ENCODE measurements at regions of chr1 and their contacts with region 1.

Region 1: DNA sequence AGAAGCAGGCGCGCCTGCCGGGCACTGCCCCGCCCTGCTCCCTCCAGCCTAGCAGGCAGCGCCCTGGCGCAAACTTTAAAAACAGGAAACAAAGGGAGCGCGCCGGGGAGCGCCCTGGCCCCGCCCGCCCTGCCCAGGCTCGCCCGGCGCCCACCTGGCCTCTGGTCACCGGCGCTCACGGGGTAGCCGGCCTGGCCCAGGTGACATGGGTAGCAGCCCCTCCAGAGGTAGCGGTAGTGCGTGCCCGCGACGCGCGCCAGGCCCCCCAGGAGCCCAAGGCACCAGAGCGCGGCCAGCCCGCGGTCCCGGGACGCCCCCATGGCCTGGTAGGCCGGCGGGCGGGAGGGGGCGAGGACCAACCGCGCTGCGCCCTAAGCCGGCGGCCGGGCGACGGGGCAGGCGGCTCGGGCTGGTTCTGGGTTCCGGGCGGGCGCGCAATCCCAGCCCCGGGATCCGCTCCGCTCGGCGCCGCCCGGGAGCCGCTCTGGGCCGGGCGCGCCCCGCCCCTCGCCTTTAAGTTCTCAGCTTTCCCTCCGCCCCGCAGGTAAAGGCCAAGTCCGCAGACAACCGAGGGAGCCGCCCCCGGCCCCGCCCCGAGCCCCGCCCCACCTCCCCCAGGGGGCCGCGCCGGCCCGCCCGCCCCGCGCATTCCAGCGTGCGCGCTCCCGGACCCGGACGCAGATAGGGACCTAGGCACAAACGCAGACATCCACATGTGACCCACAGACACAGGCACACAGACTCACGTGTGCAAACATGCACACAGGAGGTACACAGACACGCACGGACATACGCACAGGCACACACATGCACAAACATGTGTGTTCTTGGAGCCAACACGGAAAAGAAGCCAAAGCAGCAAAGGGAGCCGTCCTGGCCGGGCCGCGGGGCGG is 76.7 kb downstream of the ARHGEF16 start:
- DNase-seq: peak; percentile 90
- H3K4me3 Mint-ChIP-seq: peak overlapping the region; percentile 78
- H3K27ac Mint-ChIP-seq: peak overlapping the region; percentile 38
- H3K4me1 Mint-ChIP-seq: peaks cover 10% of the 10 kb centered on the region
- H3K27me3 Mint-ChIP-seq: no peaks in the 10 kb centered on the region

Region 2: DNA sequence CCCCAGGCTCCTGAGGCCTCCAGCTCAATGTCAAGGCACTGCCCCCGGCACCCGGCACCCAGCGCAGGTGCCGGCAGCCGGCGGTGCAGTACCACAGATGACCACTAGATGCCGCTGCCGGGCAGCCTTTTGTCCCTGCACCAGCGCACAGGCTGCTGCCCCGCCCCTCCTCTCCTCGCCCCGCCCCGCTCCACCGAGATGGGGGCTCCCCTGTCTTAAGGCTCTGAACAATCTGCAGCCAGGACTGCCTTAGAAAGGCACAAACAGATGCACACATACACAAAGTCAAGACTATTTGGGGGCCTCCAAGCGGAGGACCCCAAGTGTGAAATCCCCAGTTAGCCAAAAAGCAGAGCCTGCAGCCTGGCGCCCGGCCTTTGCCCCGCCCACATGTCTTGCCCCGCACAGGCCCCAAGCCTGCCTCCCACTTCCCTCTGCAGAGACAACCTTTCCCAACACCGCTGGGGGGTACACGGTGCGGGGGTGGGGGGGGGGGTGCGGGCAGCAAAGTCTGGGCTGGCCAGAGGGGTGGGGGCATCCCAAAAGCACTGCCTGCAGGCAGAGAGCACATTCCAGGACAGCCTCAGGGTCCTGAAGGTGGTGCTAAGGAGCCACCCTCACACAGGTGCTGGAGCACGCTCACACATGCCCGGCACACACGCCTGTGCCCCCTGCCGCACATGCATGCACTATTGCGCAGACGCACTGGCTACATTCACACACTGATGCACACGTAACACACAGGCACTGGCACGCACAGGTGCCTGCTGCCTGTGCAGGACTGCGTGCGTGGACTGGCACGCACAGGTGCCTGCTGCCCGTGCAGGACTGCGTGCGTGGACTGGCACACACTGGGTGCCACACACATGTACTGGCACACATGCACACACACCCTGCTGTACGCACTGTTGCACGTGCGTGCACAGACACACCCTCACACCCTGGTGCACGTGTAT is 39.6 kb before region 1 on chr1:
- CTCF ChIA-PET with region 1: interaction called, 6 read pairs
- POLR2A ChIA-PET with region 1: no interaction called
- intact Hi-C with region 1: loop called (anchors 5 kb)
- DNase-seq: peak; percentile 88
- H3K4me3 Mint-ChIP-seq: no peak overlapping the region
- H3K27ac Mint-ChIP-seq: no peak overlapping the region
- H3K4me1 Mint-ChIP-seq: peaks cover 5% of the 10 kb centered on the region
- H3K27me3 Mint-ChIP-seq: no peaks in the 10 kb centered on the region

Region 3: GRCh38 chr1:3564921-3565827 is 34.0 kb after region 1 on chr1:
- CTCF ChIA-PET with region 1: no interaction called
- POLR2A ChIA-PET with region 1: no interaction called
- intact Hi-C with region 1: no loop called
- DNase-seq: peak; percentile 28
- H3K4me3 Mint-ChIP-seq: no peak overlapping the region
- H3K27ac Mint-ChIP-seq: no peak overlapping the region
- H3K4me1 Mint-ChIP-seq: no peaks in the 10 kb centered on the region
- H3K27me3 Mint-ChIP-seq: no peaks in the 10 kb centered on the region

Measured in activated CD4-positive, alpha-beta memory T cell treated with anti-CD3 and anti-CD28 coated beads for 36 hours (primary cell).